GM23248 (cell line): ENCODE measurements at regions of chr6 and their contacts with region 1.

Region 1: GRCh38 chr6:75296811-75297779 is 12.5 kb upstream of the TMEM30A start:
- DNase-seq: peak; percentile 61
- H3K4me3 ChIP-seq: no peak overlapping the region
- H3K27ac ChIP-seq: no peak overlapping the region
- H3K4me1 ChIP-seq: no peaks in the 10 kb centered on the region
- H3K27me3 ChIP-seq: no peaks in the 10 kb centered on the region

Region 2: GRCh38 chr6:75532515-75532914 is 235.4 kb after region 1 on chr6:
- in situ Hi-C with region 1: loop called (anchors 10 kb)
- DNase-seq: peak; percentile 65
- H3K4me3 ChIP-seq: no peak overlapping the region
- H3K27ac ChIP-seq: no peak overlapping the region
- H3K4me1 ChIP-seq: peaks cover 35% of the 10 kb centered on the region
- H3K27me3 ChIP-seq: no peaks in the 10 kb centered on the region